ENCODE measurements at regions of chr12 and their contacts with region 1.

Region 1: GRCh38 chr12:49018261-49019119 is at the start of gene PRKAG1:
- DNase-seq: peak; percentile 98
- ATAC-seq: peak; percentile 92
- H3K4me3 Mint-ChIP-seq: peak within 1 kb of the TSS; percentile 86
- H3K27ac Mint-ChIP-seq: peak within 1 kb of the TSS; percentile 97
- H3K4me1 Mint-ChIP-seq: peaks cover 28% of the 10 kb centered on the region
- H3K27me3 Mint-ChIP-seq: no peaks in the 10 kb centered on the region
- total RNA-seq, gene PRKAG1: 58.9 to 66.0 TPM

Region 2: GRCh38 chr12:48681738-48682532 is 336.6 kb before region 1 on chr12 and contains the start of gene KANSL2:
- CTCF ChIA-PET with region 1: no interaction called
- DNase-seq: peak; percentile 100
- ATAC-seq: peak; percentile 98
- H3K4me3 Mint-ChIP-seq: peak within 1 kb of the TSS; percentile 98
- H3K27ac Mint-ChIP-seq: peak within 1 kb of the TSS; percentile 96
- H3K4me1 Mint-ChIP-seq: peaks cover 45% of the 10 kb centered on the region
- H3K27me3 Mint-ChIP-seq: no peaks in the 10 kb centered on the region
- total RNA-seq, gene KANSL2: 56.6 to 57.7 TPM

Region 3: DNA sequence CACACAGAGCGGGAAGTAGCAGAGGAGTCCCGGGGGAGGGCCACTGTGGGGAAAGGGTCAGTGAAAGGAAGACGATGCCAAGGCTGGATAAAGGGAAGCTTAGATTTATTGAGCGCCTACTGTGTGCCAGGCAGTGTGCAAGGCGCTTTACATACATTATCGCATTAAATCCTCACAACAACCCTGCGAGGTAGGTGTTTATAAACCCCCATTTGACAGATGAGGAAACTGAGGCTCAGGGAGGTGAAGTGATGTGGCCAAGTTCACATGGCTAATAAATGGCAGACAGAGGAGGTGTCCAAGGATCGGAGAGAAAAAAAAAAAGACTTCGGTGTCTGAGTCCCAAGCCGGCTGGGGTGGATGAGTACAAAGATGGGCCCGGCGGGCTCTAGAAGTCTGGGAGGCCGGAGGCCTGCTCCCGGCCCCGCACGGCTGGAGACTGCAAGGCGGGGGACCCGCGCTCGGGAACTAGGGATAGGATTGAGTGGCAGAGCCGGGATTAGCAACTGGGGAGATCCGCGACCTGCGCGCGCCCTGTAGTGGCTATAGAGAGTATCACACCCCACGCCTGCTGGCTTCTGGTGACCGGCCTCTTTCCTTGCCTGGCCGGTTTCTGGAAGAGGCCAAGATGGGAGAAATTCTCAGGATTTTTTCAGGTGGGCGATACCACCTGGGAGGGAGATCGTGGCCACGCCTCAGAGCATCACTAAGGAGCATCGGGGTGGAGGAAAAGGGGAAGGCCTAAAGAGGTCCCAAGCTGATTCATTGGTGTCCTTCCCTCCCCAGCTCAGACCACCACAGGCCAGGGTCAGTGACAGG is 23.2 kb before region 1 on chr12:
- CTCF ChIA-PET with region 1: interaction called, 45 read pairs
- DNase-seq: peak; percentile 65
- ATAC-seq: peak; percentile 44
- H3K4me3 Mint-ChIP-seq: no peak overlapping the region
- H3K27ac Mint-ChIP-seq: no peak overlapping the region
- H3K4me1 Mint-ChIP-seq: peaks cover 33% of the 10 kb centered on the region
- H3K27me3 Mint-ChIP-seq: peaks cover 60% of the 10 kb centered on the region